PC-3 (cell line): ENCODE measurements at regions of chr6 and their contacts with region 1.

Region 1: DNA sequence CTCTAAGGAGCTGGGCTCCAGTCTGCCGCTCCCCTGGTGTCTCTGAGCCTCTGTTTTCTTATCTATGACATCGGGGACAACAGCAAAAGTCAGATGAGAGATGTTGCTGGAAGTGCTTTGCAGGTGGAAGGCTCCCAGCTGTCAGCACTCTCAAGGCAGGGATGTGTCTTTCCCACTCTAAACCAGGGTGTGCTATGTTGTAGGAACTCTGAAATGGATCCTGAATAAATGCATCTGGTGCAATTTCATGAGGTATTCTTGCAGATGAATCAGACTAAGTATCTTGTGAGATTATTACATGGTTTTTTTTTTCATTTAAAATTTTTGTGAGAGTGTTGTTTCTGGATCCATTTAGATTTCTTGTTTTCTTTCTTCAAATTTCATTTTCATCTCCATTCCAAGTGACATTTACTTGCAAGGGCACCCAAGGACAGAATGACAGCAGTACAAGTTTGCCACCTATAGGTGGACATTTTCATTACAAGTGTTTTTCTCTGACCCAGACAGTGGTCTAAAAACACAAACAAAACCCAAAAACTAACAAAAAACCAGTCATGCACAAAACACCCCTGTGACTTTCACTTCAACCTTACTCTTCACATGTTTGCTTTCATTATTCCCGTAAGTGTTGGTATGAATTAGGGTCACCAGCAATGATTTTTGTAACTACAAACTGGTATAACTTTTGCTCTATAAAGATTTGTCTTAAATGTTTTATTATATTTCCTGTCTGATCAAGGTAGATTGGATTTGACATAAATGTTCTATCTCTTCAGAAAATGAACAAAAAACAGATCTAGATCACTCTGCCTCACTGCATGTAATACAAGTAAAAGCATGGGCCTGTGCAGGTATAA is 14.7 kb upstream of the SIM1 start:
- DNase-seq: peak; percentile 65
- ATAC-seq: peak; percentile 47; the same call in 1 of the 2 replicates
- H3K4me3 ChIP-seq: no peak overlapping the region
- H3K27ac ChIP-seq: no peak overlapping the region
- H3K4me1 ChIP-seq: peaks cover 11% of the 10 kb centered on the region
- H3K27me3 ChIP-seq: no peaks in the 10 kb centered on the region
- CTCF ChIP-seq: peak; percentile 75

Region 2: GRCh38 chr6:100105138-100105753 is 374.2 kb before region 1 on chr6:
- CTCF ChIA-PET with region 1: no interaction called
- POLR2A ChIA-PET with region 1: no interaction called
- intact Hi-C with region 1: loop called (anchors 1 kb)
- DNase-seq: no peak
- ATAC-seq: no peak
- H3K4me3 ChIP-seq: no peak overlapping the region
- H3K27ac ChIP-seq: no peak overlapping the region
- H3K4me1 ChIP-seq: peaks cover 27% of the 10 kb centered on the region
- H3K27me3 ChIP-seq: no peaks in the 10 kb centered on the region
- CTCF ChIP-seq: no peak

Region 3: GRCh38 chr6:100116411-100117194 is 362.8 kb before region 1 on chr6:
- CTCF ChIA-PET with region 1: no interaction called
- POLR2A ChIA-PET with region 1: no interaction called
- intact Hi-C with region 1: loop called (anchors 1 kb)
- DNase-seq: peak; percentile 79
- ATAC-seq: peak; percentile 81
- H3K4me3 ChIP-seq: no peak overlapping the region
- H3K27ac ChIP-seq: no peak overlapping the region
- H3K4me1 ChIP-seq: peaks cover 11% of the 10 kb centered on the region; the same call in 1 of the 2 replicates
- H3K27me3 ChIP-seq: no peaks in the 10 kb centered on the region
- CTCF ChIP-seq: peak; percentile 84

Region 4: GRCh38 chr6:100228831-100229641 is 250.4 kb before region 1 on chr6:
- CTCF ChIA-PET with region 1: no interaction called
- POLR2A ChIA-PET with region 1: no interaction called
- intact Hi-C with region 1: loop called (anchors 10 kb)
- DNase-seq: peak; percentile 78
- ATAC-seq: peak; percentile 98
- H3K4me3 ChIP-seq: peak overlapping the region; percentile 71
- H3K27ac ChIP-seq: peak overlapping the region; percentile 20; the same call in 1 of the 2 replicates
- H3K4me1 ChIP-seq: peaks cover 41% of the 10 kb centered on the region
- H3K27me3 ChIP-seq: no peaks in the 10 kb centered on the region
- CTCF ChIP-seq: no peak; the same call in 1 of the 2 replicates

Region 5: DNA sequence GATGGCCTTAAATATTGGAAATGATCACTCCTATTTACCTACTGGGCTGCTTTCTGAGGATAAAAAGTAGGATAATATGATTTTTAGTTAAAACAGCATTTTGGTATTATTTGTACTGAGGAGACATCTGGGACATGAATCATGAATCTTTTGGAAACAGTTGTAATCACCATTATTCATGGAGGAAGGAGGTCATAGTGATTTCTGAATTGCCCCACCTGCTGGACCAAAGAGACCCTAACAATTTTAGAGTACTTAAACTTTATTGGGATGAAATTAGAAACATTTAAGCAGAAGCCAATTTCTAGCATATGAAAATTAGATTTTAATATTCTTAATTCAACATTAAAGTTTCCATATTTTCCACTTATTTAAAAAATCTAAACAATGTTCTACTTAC is 93.8 kb after region 1 on chr6:
- CTCF ChIA-PET with region 1: interaction called, 5 read pairs
- POLR2A ChIA-PET with region 1: no interaction called
- intact Hi-C with region 1: loop called (anchors 5 kb)
- DNase-seq: peak; percentile 60
- ATAC-seq: no peak
- H3K4me3 ChIP-seq: no peak overlapping the region
- H3K27ac ChIP-seq: no peak overlapping the region
- H3K4me1 ChIP-seq: no peaks in the 10 kb centered on the region
- H3K27me3 ChIP-seq: no peaks in the 10 kb centered on the region
- CTCF ChIP-seq: peak; percentile 62

Region 6: DNA sequence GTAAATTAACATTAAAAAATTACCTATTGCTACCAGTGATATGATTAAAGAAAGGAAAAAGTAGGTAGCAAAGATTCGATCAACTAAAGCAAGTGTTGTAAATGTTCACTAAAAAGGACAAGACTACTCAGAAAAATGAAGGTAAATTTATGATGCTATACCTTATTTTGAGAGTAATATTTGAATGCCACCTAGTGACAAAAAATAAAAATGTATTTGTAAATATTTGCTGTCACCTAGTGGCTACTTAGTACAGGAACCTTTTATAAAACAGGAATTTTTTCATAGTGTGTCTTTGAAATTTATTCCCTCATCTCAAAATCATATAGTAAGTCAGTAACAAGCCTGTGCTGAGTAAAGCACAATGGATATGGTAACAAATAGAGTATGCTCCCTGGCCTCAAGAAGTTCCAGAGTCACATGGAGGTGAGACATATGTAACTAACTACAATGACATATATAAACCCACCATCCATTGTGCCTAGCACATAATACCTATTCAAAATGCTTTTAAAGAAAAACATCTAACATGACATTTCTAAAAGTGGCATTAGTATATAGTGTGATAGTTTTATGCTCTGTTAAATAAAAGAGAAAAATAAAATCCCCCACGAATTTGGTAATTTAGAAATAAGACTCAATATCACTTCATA is 178.4 kb after region 1 on chr6:
- CTCF ChIA-PET with region 1: no interaction called
- POLR2A ChIA-PET with region 1: no interaction called
- intact Hi-C with region 1: loop called (anchors 2 kb)
- DNase-seq: peak; percentile 61
- ATAC-seq: no peak; the same call in 1 of the 2 replicates
- H3K4me3 ChIP-seq: no peak overlapping the region
- H3K27ac ChIP-seq: no peak overlapping the region
- H3K4me1 ChIP-seq: peaks cover 2% of the 10 kb centered on the region
- H3K27me3 ChIP-seq: no peaks in the 10 kb centered on the region
- CTCF ChIP-seq: peak; percentile 87